Activated CD4-positive, alpha-beta T cell treated with anti-CD3 and anti-CD28 coated beads for 36 hours (primary cell): ENCODE measurements at regions of chr1 and their contacts with region 1.

Region 1: GRCh38 chr1:92476071-92476631 is 10.6 kb downstream of the GFI1 start:
- DNase-seq: peak; percentile 84
- ATAC-seq: peak; percentile 57
- H3K4me3 Mint-ChIP-seq: peak overlapping the region; percentile 37
- H3K27ac Mint-ChIP-seq: peak overlapping the region; percentile 92
- H3K4me1 Mint-ChIP-seq: peaks cover 85% of the 10 kb centered on the region
- H3K27me3 Mint-ChIP-seq: no peaks in the 10 kb centered on the region

Region 2: DNA sequence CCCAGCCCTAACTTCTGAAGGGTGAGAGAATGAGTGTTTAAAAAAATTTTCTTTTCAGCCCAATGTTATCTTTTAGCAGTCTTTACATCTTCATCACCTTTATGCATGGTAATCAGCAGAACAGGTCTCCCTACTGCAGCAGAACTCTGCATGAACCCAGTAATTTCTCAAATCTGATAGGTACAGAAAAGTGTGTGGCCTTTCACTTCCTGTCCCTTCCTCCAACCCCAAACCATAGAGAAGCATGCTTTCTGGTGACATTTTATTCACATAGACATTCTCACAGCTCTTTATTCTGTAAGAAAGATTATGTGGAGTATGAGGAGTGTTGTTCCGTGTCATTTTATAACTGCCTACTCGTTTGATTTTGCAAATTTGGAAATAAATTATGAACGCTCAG is 108.7 kb before region 1 on chr1:
- CTCF ChIA-PET with region 1: interaction called, 3 read pairs
- POLR2A ChIA-PET with region 1: no interaction called
- intact Hi-C with region 1: loop called (anchors 5 kb)
- DNase-seq: no peak
- ATAC-seq: peak; percentile 55
- H3K4me3 Mint-ChIP-seq: no peak overlapping the region
- H3K27ac Mint-ChIP-seq: no peak overlapping the region
- H3K4me1 Mint-ChIP-seq: peaks cover 42% of the 10 kb centered on the region
- H3K27me3 Mint-ChIP-seq: no peaks in the 10 kb centered on the region

Region 3: GRCh38 chr1:92447033-92447681 is 29.0 kb before region 1 on chr1:
- CTCF ChIA-PET with region 1: no interaction called
- POLR2A ChIA-PET with region 1: interaction called, 4 read pairs
- intact Hi-C with region 1: loop called in 1 of 2 experiments (anchors 1 kb)
- DNase-seq: no peak
- ATAC-seq: peak; percentile 66
- H3K4me3 Mint-ChIP-seq: no peak overlapping the region
- H3K27ac Mint-ChIP-seq: no peak overlapping the region
- H3K4me1 Mint-ChIP-seq: peaks cover 10% of the 10 kb centered on the region
- H3K27me3 Mint-ChIP-seq: no peaks in the 10 kb centered on the region

Region 4: GRCh38 chr1:92511541-92511940 is 35.4 kb after region 1 on chr1:
- CTCF ChIA-PET with region 1: no interaction called
- POLR2A ChIA-PET with region 1: no interaction called
- intact Hi-C with region 1: no loop called
- DNase-seq: no peak
- ATAC-seq: no peak
- H3K4me3 Mint-ChIP-seq: no peak overlapping the region
- H3K27ac Mint-ChIP-seq: no peak overlapping the region
- H3K4me1 Mint-ChIP-seq: peaks cover 14% of the 10 kb centered on the region
- H3K27me3 Mint-ChIP-seq: no peaks in the 10 kb centered on the region

Region 5: DNA sequence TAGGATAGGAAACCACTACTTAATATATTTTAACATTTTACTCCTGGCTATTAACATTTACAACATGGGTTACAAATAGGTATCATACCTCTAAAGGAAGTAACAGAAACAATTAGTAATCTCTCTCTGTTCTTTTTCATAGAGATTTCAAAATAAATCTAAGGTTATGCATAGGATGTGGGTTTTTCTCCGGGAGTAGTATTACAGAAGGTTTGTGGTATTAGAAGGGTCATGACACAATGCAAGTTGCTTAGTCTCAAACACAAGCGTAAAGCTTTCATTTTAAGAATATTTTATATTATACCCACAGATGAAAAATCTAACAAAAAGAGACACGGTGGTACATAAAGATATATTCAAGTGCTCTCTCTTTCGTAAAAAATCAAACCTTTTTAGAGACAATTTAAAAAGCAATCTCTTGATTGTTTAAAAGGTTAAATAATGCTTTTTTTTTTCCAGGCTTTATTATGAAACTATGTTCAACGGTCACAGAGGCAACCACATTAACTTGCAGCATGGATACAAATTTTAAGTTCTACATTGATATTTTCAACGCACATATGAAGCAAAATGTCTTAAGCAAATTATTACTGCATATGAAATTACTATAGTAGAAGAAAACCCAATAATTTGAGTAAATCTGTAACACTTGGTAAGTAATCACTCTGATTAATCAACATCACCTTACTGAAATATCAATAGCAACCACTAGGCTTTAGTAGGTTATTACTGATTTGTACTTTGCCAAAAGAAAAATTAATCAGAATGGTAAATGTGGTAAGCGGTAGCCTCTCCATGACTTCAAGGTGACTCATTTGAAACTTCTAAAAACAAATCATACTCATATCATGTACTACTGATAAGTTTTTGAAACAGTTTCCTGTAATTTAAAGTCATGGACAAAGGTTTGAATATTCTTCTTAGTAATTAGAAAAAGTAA is 107.9 kb after region 1 on chr1:
- CTCF ChIA-PET with region 1: interaction called, 5 read pairs
- POLR2A ChIA-PET with region 1: interaction called, 12 read pairs
- intact Hi-C with region 1: loop called in 1 of 2 experiments (anchors 1 kb)
- DNase-seq: no peak
- ATAC-seq: peak; percentile 60
- H3K4me3 Mint-ChIP-seq: peak overlapping the region; percentile 68
- H3K27ac Mint-ChIP-seq: peak overlapping the region; percentile 92
- H3K4me1 Mint-ChIP-seq: peaks cover 79% of the 10 kb centered on the region
- H3K27me3 Mint-ChIP-seq: no peaks in the 10 kb centered on the region